ENCODE measurements at regions of chr17 and their contacts with region 1.

Region 1: GRCh38 chr17:38557836-38558727 is 47.7 kb downstream of the SRCIN1 start:
- DNase-seq: peak; percentile 75 to 94 (median 88)
- ATAC-seq: peak; percentile 74
- H3K4me3 ChIP-seq: peak overlapping the region; percentile 60 to 77
- H3K4me3 Mint-ChIP-seq: peak overlapping the region; percentile 92
- H3K27ac ChIP-seq: no peak overlapping the region
- H3K27ac Mint-ChIP-seq: no peak overlapping the region
- H3K4me1 ChIP-seq: peaks cover 28% of the 10 kb centered on the region
- H3K4me1 Mint-ChIP-seq: peaks cover 26% of the 10 kb centered on the region
- H3K27me3 ChIP-seq: peaks cover 17 to 27% of the 10 kb centered on the region in 2 experiments
- H3K27me3 Mint-ChIP-seq: peaks cover 24% of the 10 kb centered on the region
- CTCF ChIP-seq: peak; percentile 93

Region 2: DNA sequence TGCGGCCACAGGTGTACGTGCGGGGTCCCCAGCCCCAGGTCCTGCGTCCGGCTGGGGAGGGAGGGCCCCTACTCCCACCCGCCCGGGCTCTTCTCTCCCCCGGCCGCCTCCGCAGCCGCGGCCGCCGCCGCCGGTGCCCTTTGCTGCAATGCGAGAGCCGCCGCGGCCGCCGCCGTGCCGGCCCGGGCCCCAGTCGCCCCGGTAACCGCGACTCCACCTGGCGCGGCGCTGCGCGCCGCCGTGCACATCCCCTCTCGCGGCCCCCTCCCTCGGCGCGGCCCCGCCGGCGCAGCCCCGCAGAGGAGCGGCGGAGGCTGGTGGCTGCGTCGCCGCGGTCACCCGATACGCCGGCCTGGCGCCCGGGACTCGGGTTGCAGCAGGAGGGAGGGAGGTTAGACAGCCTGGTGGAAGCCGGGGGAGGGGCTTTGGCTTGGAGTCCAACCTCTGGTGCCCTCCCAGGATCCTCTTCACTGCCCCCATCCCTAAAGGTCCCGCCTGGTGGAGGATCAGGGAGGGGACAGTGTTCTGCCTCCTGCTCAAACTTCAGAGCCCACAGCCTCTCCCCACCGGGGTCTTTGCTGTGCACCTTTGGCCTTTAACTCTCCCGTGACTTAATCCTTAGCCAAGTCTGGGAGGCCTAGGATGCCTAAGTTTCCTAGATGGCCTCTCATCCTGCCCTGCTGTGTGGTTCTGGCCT is 14.7 kb after region 1 on chr17:
- CTCF ChIA-PET with region 1: interaction called, 33 read pairs
- POLR2A ChIA-PET with region 1: no interaction called
- intact Hi-C with region 1: loop called in 1 of 2 experiments (anchors 1 kb)
- DNase-seq: peak in 2 of 9 experiments; percentile 30 to 43
- ATAC-seq: peak; percentile 67
- H3K4me3 ChIP-seq: no peak overlapping the region
- H3K4me3 Mint-ChIP-seq: peak overlapping the region; percentile 61
- H3K27ac ChIP-seq: no peak overlapping the region
- H3K27ac Mint-ChIP-seq: no peak overlapping the region
- H3K4me1 ChIP-seq: peaks cover 8% of the 10 kb centered on the region
- H3K4me1 Mint-ChIP-seq: peaks cover 12% of the 10 kb centered on the region
- H3K27me3 ChIP-seq: peaks cover 25 to 45% of the 10 kb centered on the region in 2 experiments
- H3K27me3 Mint-ChIP-seq: peaks cover 87% of the 10 kb centered on the region
- CTCF ChIP-seq: no peak

Region 3: DNA sequence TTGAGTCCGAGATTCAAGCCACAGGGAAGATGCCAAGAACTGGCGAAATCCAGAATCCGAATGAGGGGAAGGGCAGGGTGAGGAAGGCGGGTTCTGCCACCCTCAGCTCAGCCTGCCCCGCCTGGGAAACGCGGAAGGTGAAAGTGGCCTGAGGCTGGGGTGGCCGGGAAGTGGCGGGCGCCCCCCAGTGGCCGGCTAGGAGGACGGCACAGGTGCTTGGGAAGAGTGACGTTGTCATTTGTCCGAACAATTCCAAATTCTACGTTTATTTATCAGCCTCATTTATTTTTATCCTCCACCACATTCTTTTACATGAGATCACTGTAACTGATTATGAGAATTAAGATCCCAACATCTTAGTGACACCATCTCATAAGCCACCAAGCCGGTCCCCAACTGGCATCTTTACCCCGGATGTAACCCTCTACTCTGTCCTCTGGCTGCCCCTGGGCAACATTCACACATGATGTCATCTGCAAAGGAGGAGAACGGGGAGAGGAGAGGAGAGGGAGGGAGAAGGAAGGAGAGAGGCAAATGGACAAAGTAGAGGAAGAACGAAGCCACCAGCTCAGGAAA is 26.4 kb after region 1 on chr17:
- CTCF ChIA-PET with region 1: interaction called, 262 read pairs
- POLR2A ChIA-PET with region 1: interaction called, 8 read pairs
- intact Hi-C with region 1: loop called (anchors 1 kb)
- DNase-seq: peak in 8 of 9 experiments; percentile 30 to 78 (median 63)
- ATAC-seq: peak; percentile 87
- H3K4me3 ChIP-seq: no peak overlapping the region
- H3K4me3 Mint-ChIP-seq: no peak overlapping the region
- H3K27ac ChIP-seq: no peak overlapping the region
- H3K27ac Mint-ChIP-seq: no peak overlapping the region
- H3K4me1 ChIP-seq: no peaks in the 10 kb centered on the region
- H3K4me1 Mint-ChIP-seq: peaks cover 3% of the 10 kb centered on the region
- H3K27me3 ChIP-seq: peaks cover 0 to 23% of the 10 kb centered on the region in 2 experiments
- H3K27me3 Mint-ChIP-seq: peaks cover 57% of the 10 kb centered on the region
- CTCF ChIP-seq: peak; percentile 89

Region 4: DNA sequence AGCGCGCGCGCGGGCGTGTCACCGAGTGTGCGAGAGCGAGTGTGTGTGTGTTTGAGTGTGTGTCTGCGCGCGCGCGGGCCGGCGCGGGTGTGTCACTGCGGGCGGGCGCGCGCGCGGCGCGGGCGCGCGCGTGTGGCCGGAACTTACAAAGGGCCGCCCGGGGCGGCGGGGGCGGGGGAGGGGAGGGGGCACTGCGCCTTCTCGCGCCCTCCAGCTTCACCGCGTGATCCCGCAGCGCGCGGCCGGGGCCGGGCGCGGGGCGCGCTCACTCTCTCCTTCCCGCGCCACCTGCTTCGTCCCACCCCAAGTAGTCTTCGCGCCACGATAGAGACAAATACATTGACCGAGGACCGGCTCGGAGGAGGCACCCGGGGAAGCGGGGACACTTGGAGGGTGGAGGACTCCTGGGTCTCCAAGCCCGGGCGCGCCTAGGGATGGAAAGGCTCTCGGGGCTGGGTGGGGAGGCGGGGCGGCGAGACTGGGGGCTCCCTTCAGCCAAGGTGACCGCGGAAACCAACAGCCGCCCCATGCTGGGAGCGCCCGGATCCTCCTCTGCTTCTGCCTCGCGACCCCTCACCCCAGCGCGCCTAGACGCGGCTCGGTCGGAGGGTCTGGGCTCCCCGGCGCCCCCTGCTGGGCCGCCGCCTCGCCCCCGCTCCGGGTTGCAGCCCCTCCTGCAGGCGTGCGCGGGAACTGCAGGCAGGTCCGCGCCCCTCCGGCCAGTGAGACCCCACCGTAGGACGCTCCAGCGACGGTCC is 48.0 kb after region 1 on chr17 and contains the start of gene SRCIN1:
- CTCF ChIA-PET with region 1: interaction called, 5 read pairs
- POLR2A ChIA-PET with region 1: no interaction called
- intact Hi-C with region 1: loop called in 1 of 2 experiments (anchors 1 kb)
- DNase-seq: peak in 7 of 9 experiments; percentile 9 to 66 (median 50)
- ATAC-seq: peak; percentile 69
- H3K4me3 ChIP-seq: peak within 1 kb of the TSS; percentile 44 to 50
- H3K4me3 Mint-ChIP-seq: peak within 1 kb of the TSS; percentile 72
- H3K27ac ChIP-seq: no peak within 1 kb of the TSS
- H3K27ac Mint-ChIP-seq: no peak within 1 kb of the TSS
- H3K4me1 ChIP-seq: peaks cover 20% of the 10 kb centered on the region
- H3K4me1 Mint-ChIP-seq: peaks cover 25% of the 10 kb centered on the region
- H3K27me3 ChIP-seq: peaks cover 41 to 50% of the 10 kb centered on the region in 2 experiments
- H3K27me3 Mint-ChIP-seq: peaks cover 44% of the 10 kb centered on the region
- CTCF ChIP-seq: peak; percentile 92
- total RNA-seq, gene SRCIN1: 0.47 to 0.52 TPM

Region 5: DNA sequence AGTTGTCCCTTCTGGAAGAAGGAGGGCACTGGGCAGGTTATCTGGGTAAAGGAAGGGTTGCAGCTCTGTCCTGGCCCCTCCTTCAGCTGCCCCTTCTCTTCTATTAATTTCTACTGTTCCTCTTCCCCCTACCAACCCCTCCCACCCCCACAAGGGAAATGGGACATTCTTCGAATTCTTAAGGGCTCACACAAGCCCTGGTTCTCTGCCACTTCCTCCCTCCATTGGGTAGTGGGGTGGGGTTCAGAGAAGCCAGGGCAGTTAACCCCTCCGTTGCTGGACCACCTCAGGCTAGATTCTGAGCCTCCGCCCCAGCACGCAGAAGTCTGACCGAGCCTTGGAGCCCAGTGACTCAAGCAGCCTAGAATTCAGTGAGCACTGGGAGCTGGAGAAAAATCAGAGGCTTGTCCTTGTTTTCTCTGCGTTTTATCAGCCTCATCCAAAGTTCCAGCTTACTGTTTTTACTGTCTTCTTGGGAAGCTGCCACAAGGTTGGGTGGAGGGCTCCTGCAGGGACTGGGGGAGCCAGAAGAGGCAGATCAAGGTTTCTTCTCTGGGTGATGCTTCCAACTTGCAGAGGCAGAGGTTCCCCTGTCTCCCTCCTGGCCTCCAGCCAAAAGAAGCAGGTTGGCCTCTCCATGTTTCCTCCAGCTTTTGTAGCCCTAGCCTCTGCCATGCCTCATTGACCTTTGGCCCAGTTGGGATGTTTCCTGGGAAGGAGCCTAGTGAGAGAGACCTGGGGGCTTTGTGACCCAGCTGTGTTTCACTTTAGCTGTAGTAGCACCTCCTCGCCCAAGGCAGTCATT is 322.0 kb after region 1 on chr17:
- CTCF ChIA-PET with region 1: no interaction called
- POLR2A ChIA-PET with region 1: no interaction called
- intact Hi-C with region 1: no loop called
- DNase-seq: peak in 2 of 9 experiments; percentile 29 to 59
- ATAC-seq: peak; percentile 48
- H3K4me3 ChIP-seq: peak overlapping the region; percentile 1 to 46
- H3K4me3 Mint-ChIP-seq: peak overlapping the region; percentile 66
- H3K27ac ChIP-seq: peak overlapping the region; percentile 34 to 57
- H3K27ac Mint-ChIP-seq: peak overlapping the region; percentile 88
- H3K4me1 ChIP-seq: peaks cover 89% of the 10 kb centered on the region
- H3K4me1 Mint-ChIP-seq: peaks cover 89% of the 10 kb centered on the region
- H3K27me3 ChIP-seq: no peaks in the 10 kb centered on the region
- H3K27me3 Mint-ChIP-seq: no peaks in the 10 kb centered on the region
- CTCF ChIP-seq: no peak

Region 6: GRCh38 chr17:39461113-39461925 is 903.2 kb after region 1 on chr17 and contains the start of gene CDK12:
- CTCF ChIA-PET with region 1: no interaction called
- POLR2A ChIA-PET with region 1: no interaction called
- intact Hi-C with region 1: loop called in 1 of 2 experiments (anchors 5 kb)
- DNase-seq: peak; percentile 90 to 99 (median 94)
- ATAC-seq: peak; percentile 86
- H3K4me3 ChIP-seq: peak within 1 kb of the TSS; percentile 75 to 84
- H3K4me3 Mint-ChIP-seq: peak within 1 kb of the TSS; percentile 95
- H3K27ac ChIP-seq: peak within 1 kb of the TSS; percentile 81 to 91
- H3K27ac Mint-ChIP-seq: peak within 1 kb of the TSS; percentile 96
- H3K4me1 ChIP-seq: peaks cover 21% of the 10 kb centered on the region
- H3K4me1 Mint-ChIP-seq: peaks cover 42% of the 10 kb centered on the region
- H3K27me3 ChIP-seq: no peaks in the 10 kb centered on the region
- H3K27me3 Mint-ChIP-seq: no peaks in the 10 kb centered on the region
- CTCF ChIP-seq: no peak
- total RNA-seq, gene CDK12: 95.5 to 101 TPM